HepG2 (cell line): ENCODE measurements at regions of chr3 and their contacts with region 1.

Region 1: GRCh38 chr3:190566043-190566933 is 52.4 kb downstream of the IL1RAP start:
- DNase-seq: peak; percentile 98
- ATAC-seq: peak; percentile 97
- H3K4me3 ChIP-seq: no peak overlapping the region; a peak in 1 of 6 replicates
- H3K27ac ChIP-seq: peak overlapping the region; percentile 75
- H3K4me1 ChIP-seq: peaks cover 37% of the 10 kb centered on the region
- H3K27me3 ChIP-seq: no peaks in the 10 kb centered on the region
- CTCF ChIP-seq: 0 out of 2 replicates have a peak, but pooled peaks have one; percentile 13
- EP300 ChIP-seq: peak; percentile 73 to 93
- POLR2A ChIP-seq: no peak
- RAD21 ChIP-seq: no peak

Region 2: GRCh38 chr3:190617185-190617584 is 50.9 kb after region 1 on chr3:
- CTCF ChIA-PET with region 1: no interaction called
- POLR2A ChIA-PET with region 1: interaction called, 3 read pairs
- in situ Hi-C with region 1: no loop called
- intact Hi-C with region 1: loop called (anchors 5 kb)
- DNase-seq: peak; percentile 92
- ATAC-seq: peak; percentile 84
- H3K4me3 ChIP-seq: no peak overlapping the region; a peak in 1 of 6 replicates
- H3K27ac ChIP-seq: peak overlapping the region; percentile 75
- H3K4me1 ChIP-seq: peaks cover 80% of the 10 kb centered on the region
- H3K27me3 ChIP-seq: no peaks in the 10 kb centered on the region
- CTCF ChIP-seq: no peak
- EP300 ChIP-seq: peak in 1 of 2 experiments; percentile 76; a peak in 3 of 4 replicates
- POLR2A ChIP-seq: no peak
- RAD21 ChIP-seq: no peak